Right ventricle myocardium superior (tissue), 1 donor: ENCODE measurements at regions of chr15 and their contacts with region 1.

Region 1: GRCh38 chr15:38991126-38991525 is 426.5 kb upstream of the RASGRP1 start:
- DNase-seq: no peak
- ATAC-seq: peak; percentile 16

Region 2: GRCh38 chr15:38817427-38818156 is 173.5 kb before region 1 on chr15:
- intact Hi-C with region 1: loop called (anchors 10 kb)
- DNase-seq: peak; percentile 89
- ATAC-seq: peak; percentile 97

Region 3: DNA sequence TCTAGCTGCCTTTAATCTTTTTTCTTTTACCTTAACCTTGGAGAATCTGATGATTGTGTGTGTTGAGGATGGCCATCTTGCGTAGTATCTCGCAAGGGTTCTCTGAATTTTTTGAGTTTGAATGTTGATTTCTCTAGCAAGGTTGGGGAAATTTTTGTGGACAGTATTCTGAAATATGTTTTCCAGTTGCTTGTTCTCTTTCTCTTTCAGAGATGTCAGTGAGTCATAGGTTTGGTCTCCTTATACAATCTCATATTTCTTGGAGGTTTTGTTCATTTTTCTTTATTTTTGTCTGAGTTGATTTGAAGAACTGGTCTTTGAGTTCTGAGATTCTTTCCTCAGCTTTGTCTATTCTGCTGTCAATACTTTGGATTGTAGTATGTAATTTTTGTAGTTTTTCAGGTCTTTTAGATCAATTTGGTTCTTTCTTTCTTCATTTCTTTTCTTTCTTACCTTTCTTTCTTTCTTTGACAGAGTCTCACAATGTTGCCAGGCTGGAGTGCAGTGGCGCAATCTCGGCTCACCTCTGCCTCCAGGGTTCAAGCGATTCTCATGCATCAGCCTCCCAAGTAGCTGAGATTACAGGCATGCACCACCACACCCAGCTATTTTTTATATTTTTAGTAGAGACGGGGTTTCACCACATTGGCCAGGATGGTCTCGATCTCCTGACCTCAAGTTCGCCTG is 60.1 kb before region 1 on chr15:
- intact Hi-C with region 1: no loop called
- DNase-seq: no peak
- ATAC-seq: no peak